Calu3 (cell line): ENCODE measurements at regions of chr2 and their contacts with region 1.

Region 1: GRCh38 chr2:234881413-234882241 is 70.2 kb upstream of the SH3BP4 start:
- DNase-seq: peak; percentile 94
- H3K4me3 Mint-ChIP-seq: no peak overlapping the region
- H3K27ac Mint-ChIP-seq: peak overlapping the region; percentile 57
- H3K4me1 Mint-ChIP-seq: peaks cover 28% of the 10 kb centered on the region
- H3K27me3 Mint-ChIP-seq: peaks cover 3% of the 10 kb centered on the region
- CTCF ChIP-seq: peak; percentile 72

Region 2: GRCh38 chr2:234823877-234824376 is 57.7 kb before region 1 on chr2:
- CTCF ChIA-PET with region 1: no interaction called
- intact Hi-C with region 1: loop called (anchors 10 kb)
- DNase-seq: peak; percentile 69
- H3K4me3 Mint-ChIP-seq: no peak overlapping the region
- H3K27ac Mint-ChIP-seq: no peak overlapping the region
- H3K4me1 Mint-ChIP-seq: peaks cover 22% of the 10 kb centered on the region
- H3K27me3 Mint-ChIP-seq: no peaks in the 10 kb centered on the region
- CTCF ChIP-seq: no peak

Region 3: GRCh38 chr2:234981197-234982117 is 99.8 kb after region 1 on chr2:
- CTCF ChIA-PET with region 1: no interaction called
- intact Hi-C with region 1: loop called (anchors 5 kb)
- DNase-seq: peak; percentile 78
- H3K4me3 Mint-ChIP-seq: peak overlapping the region; percentile 67
- H3K27ac Mint-ChIP-seq: peak overlapping the region; percentile 93
- H3K4me1 Mint-ChIP-seq: peaks cover 73% of the 10 kb centered on the region
- H3K27me3 Mint-ChIP-seq: no peaks in the 10 kb centered on the region
- CTCF ChIP-seq: no peak

Region 4: DNA sequence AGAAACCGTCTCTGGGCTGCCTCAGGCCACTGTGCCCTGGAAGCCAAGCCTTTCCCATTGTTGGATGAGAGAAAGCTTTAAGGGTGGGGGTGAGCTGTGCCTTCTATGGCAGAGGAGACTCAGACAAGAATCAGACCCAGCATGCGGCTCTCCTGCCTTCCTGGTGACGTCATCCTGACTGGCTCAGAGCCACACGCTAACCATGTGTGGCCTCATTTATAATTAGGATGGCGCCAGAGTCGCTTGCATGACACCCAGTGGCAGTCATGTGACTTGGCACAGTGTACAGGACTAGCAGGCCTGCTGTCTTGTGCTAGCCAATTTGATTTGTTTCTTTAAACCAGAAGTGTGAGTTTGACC is 169.3 kb after region 1 on chr2:
- CTCF ChIA-PET with region 1: interaction called, 4 read pairs
- intact Hi-C with region 1: loop called (anchors 5 kb)
- DNase-seq: peak; percentile 91
- H3K4me3 Mint-ChIP-seq: peak overlapping the region; percentile 41
- H3K27ac Mint-ChIP-seq: peak overlapping the region; percentile 59
- H3K4me1 Mint-ChIP-seq: peaks cover 64% of the 10 kb centered on the region
- H3K27me3 Mint-ChIP-seq: no peaks in the 10 kb centered on the region
- CTCF ChIP-seq: no peak

Region 5: GRCh38 chr2:235106874-235107639 is 225.4 kb after region 1 on chr2:
- CTCF ChIA-PET with region 1: interaction called, 5 read pairs
- intact Hi-C with region 1: loop called (anchors 2 kb)
- DNase-seq: peak; percentile 68
- H3K4me3 Mint-ChIP-seq: no peak overlapping the region
- H3K27ac Mint-ChIP-seq: no peak overlapping the region
- H3K4me1 Mint-ChIP-seq: peaks cover 7% of the 10 kb centered on the region
- H3K27me3 Mint-ChIP-seq: peaks cover 21% of the 10 kb centered on the region
- CTCF ChIP-seq: peak; percentile 63